ENCODE measurements at regions of chr15 and their contacts with region 1.

Region 1: GRCh38 chr15:90071208-90071807 is 31.0 kb downstream of the IDH2 start:
- DNase-seq: peak; percentile 86
- H3K4me3 ChIP-seq: no peak overlapping the region
- H3K27ac ChIP-seq: no peak overlapping the region
- H3K4me1 ChIP-seq: no peaks in the 10 kb centered on the region
- H3K27me3 ChIP-seq: no peaks in the 10 kb centered on the region
- CTCF ChIP-seq: peak; percentile 73 to 80 (median 75)
- POLR2A ChIP-seq: no peak

Region 2: DNA sequence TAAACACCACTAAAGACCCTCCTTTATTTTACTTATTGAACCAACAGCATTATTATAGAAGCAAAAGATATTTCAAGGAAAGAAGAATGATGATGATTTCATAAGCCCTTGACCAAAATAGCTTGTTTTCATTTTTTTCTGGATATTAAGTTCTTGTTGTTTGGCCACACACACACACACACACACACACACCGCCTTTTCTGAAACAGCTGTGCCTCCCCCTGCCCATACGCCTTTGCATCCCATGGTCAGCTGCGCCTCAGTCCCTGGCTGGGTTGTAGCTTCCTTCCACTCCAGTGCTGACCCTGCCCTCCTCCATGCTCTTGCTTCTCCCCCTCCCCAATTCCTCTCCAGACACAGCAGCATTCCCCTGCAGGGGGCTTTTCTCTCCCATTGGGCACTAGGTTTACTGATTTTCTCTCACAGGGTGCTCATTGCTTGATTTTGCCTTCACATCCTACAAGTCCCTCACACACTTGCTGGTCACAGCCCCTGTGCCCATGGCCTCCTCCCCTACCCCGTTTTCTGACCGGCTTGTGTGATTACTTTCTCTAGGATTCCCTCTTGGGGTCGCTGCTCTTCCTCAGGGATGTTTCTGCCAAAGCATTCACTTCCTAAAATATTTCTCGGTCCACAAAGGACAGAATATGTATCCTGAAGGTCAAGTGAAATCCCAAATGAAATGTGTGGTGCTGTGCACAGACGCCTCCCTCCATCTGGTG is 338.7 kb before region 1 on chr15:
- intact Hi-C with region 1: loop called (anchors 10 kb)
- DNase-seq: no peak
- H3K4me3 ChIP-seq: no peak overlapping the region
- H3K27ac ChIP-seq: no peak overlapping the region
- H3K4me1 ChIP-seq: no peaks in the 10 kb centered on the region
- H3K27me3 ChIP-seq: no peaks in the 10 kb centered on the region
- CTCF ChIP-seq: no peak
- POLR2A ChIP-seq: no peak

Region 3: GRCh38 chr15:89904519-89904918 is 166.8 kb before region 1 on chr15:
- intact Hi-C with region 1: loop called (anchors 10 kb)
- DNase-seq: no peak
- H3K4me3 ChIP-seq: no peak overlapping the region
- H3K27ac ChIP-seq: no peak overlapping the region
- H3K4me1 ChIP-seq: no peaks in the 10 kb centered on the region
- H3K27me3 ChIP-seq: no peaks in the 10 kb centered on the region
- CTCF ChIP-seq: no peak
- POLR2A ChIP-seq: no peak

Measured in testis (tissue), 5 donors.